Right lobe of liver (tissue), 6 donors: ENCODE measurements at regions of chr12 and their contacts with region 1.

Region 1: GRCh38 chr12:119115296-119115905 is 63.3 kb upstream of the HSPB8 start:
- DNase-seq: no peak
- ATAC-seq: peak; percentile 43 to 69 (median 46)
- H3K4me3 ChIP-seq: no peak overlapping the region
- H3K27ac ChIP-seq: no peak overlapping the region
- H3K4me1 ChIP-seq: no peaks in the 10 kb centered on the region
- H3K27me3 ChIP-seq: no peaks in the 10 kb centered on the region
- CTCF ChIP-seq: peak; percentile 71 to 91 (median 90)
- POLR2A ChIP-seq: no peak

Region 2: GRCh38 chr12:119412811-119413794 is 297.7 kb after region 1 on chr12:
- intact Hi-C with region 1: loop called in 1 of 2 experiments (anchors 5 kb)
- DNase-seq: peak; percentile 35 to 61 (median 56)
- ATAC-seq: peak; percentile 72 to 88 (median 79)
- H3K4me3 ChIP-seq: no peak overlapping the region
- H3K27ac ChIP-seq: no peak overlapping the region
- H3K4me1 ChIP-seq: no peaks in the 10 kb centered on the region
- H3K27me3 ChIP-seq: no peaks in the 10 kb centered on the region
- CTCF ChIP-seq: peak; percentile 75 to 91 (median 88)
- POLR2A ChIP-seq: no peak

Region 3: GRCh38 chr12:119423285-119423684 is 307.9 kb after region 1 on chr12:
- intact Hi-C with region 1: loop called in 1 of 2 experiments (anchors 10 kb)
- DNase-seq: no peak
- ATAC-seq: no peak
- H3K4me3 ChIP-seq: no peak overlapping the region
- H3K27ac ChIP-seq: no peak overlapping the region
- H3K4me1 ChIP-seq: no peaks in the 10 kb centered on the region
- H3K27me3 ChIP-seq: peaks cover 4% of the 10 kb centered on the region in 2 donors
- CTCF ChIP-seq: no peak
- POLR2A ChIP-seq: no peak